ENCODE measurements at regions of chr1 and their contacts with region 1.

Region 1: DNA sequence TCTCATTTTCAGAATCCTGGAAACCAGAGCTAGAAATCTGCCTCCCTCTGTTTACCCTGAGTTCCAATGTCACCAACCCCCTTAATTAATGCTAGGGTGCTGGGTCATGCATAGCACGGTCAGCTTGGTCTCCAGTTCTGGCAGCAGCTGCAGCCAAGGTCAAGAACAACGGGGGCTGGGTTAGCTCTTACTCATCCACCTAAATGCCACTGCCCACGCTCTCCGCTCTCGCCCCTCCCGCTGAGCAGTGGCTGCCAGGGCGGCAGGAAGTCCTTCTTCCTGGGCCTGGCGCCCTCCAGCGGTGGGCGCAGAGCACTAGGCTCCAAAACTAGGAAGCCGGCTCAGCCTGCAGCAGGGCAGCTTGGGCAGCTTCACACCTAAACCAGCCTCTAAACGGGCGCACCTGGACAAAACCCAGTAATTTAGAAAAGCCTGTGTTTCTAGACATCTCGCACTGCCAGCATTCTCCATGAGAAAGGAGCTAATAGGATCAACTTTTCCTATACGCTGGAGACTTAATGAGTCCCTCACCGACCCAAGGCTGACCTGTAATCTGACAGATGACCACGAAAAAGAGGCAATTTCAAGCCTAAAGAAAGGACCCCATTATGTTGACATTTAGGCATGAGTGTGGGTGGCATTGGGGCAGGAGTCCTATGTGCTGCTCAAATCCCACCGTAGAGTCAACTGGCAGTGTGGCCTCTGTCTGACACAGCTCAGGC is 78.3 kb upstream of the LRRN2 start:
- DNase-seq: peak; percentile 67
- H3K4me3 ChIP-seq: no peak overlapping the region
- H3K27ac ChIP-seq: no peak overlapping the region
- H3K4me1 ChIP-seq: no peaks in the 10 kb centered on the region
- H3K27me3 ChIP-seq: no peaks in the 10 kb centered on the region
- CTCF ChIP-seq: peak; percentile 69 to 93

Region 2: GRCh38 chr1:204565617-204566582 is 198.0 kb before region 1 on chr1:
- CTCF ChIA-PET with region 1: interaction called, 21 read pairs
- dilution Hi-C with region 1: no loop called
- in situ Hi-C with region 1: no loop called
- intact Hi-C with region 1: loop called (anchors 1 kb)
- DNase-seq: peak; percentile 71
- H3K4me3 ChIP-seq: no peak overlapping the region
- H3K27ac ChIP-seq: no peak overlapping the region
- H3K4me1 ChIP-seq: peaks cover 8% of the 10 kb centered on the region
- H3K27me3 ChIP-seq: no peaks in the 10 kb centered on the region
- CTCF ChIP-seq: peak; percentile 52 to 73

Region 3: DNA sequence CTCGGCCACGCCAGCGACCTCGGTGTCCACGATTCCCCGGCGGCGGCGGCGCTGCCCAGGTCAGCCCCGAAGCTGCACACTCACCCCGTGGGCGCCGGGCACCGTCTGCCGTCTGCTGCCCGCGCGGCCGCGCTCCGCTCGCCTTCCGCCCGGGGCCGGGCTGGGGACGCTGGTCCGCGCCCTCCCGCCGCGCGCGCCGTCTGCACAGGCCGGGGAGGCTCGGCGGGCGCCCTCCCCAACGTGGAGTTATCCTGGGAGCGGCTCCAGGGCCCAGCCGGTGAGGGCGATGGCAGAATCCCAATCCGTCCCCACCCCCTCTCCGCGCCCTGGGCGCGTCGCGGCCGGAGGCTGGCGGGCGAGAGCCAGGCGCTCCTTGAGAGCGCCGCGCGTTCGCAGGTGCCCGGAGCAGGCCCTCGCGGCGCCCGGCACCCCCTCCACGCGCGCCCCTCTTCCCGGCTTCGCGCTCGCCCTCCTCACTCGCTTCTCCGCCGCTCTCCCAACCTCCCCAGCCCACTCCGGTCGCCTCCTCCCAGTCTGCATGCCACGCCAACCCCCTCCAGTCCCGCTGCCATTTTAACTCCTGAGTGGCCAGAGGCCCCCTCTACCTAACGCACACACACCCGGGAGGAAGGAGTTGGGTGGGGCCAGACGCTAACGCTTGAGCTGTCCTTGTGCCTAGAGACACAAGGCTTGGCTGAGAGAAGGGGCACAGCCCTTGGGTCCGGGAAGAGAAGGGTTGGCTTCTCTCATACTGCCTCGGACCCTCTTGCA is 78.4 kb before region 1 on chr1 and contains the start of gene LRRN2:
- CTCF ChIA-PET with region 1: no interaction called
- dilution Hi-C with region 1: no loop called
- in situ Hi-C with region 1: no loop called
- intact Hi-C with region 1: loop called (anchors 5 kb)
- DNase-seq: no peak
- H3K4me3 ChIP-seq: peak within 1 kb of the TSS in 1 of 3 experiments; percentile 22
- H3K27ac ChIP-seq: no peak within 1 kb of the TSS
- H3K4me1 ChIP-seq: no peaks in the 10 kb centered on the region
- H3K27me3 ChIP-seq: peaks cover 31% of the 10 kb centered on the region
- CTCF ChIP-seq: no peak
- total RNA-seq, gene LRRN2: 0.83 TPM in 1 of 2 donors, not detected in the other